ENCODE measurements at regions of chr11 and their contacts with region 1.

Region 1: GRCh38 chr11:5405173-5405572 is 16.7 kb upstream of the OR51Q1 start:
- DNase-seq: no peak
- H3K4me3 ChIP-seq: no peak overlapping the region
- H3K27ac ChIP-seq: no peak overlapping the region
- H3K4me1 ChIP-seq: no peaks in the 10 kb centered on the region
- H3K27me3 ChIP-seq: no peaks in the 10 kb centered on the region
- CTCF ChIP-seq: no peak

Region 2: DNA sequence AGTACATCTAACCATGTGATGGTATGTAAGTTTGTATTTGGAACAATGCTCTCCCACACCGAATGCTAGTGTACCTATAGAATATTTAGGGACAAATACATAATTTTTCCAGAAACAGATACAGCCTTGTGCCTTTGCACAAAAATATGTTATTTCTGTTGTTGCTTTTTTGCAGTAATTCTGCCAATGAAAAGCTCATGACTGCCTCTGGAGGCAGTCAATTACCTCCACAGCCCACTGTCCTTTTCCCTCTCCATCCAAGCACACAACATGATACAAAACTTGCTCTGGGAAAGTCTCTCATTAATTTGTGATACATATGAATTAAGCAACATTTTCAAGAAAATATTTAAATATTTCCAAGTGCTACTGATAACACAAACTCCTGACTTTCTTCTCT is 47.5 kb after region 1 on chr11:
- CTCF ChIA-PET with region 1: no interaction called
- dilution Hi-C with region 1: loop called (anchors 5 kb)
- in situ Hi-C with region 1: no loop called
- intact Hi-C with region 1: no loop called
- DNase-seq: no peak
- H3K4me3 ChIP-seq: no peak overlapping the region
- H3K27ac ChIP-seq: no peak overlapping the region
- H3K4me1 ChIP-seq: no peaks in the 10 kb centered on the region
- H3K27me3 ChIP-seq: peaks cover 2% of the 10 kb centered on the region
- CTCF ChIP-seq: peak in 1 of 2 donors; percentile 5

Measured in mammary epithelial cell (primary cell).